ENCODE measurements at regions of chr16 and their contacts with region 1.

Region 1: GRCh38 chr16:57519796-57520360 is 16.5 kb downstream of the CCDC102A start:
- DNase-seq: peak in 9 of 10 donors; percentile 76 to 88 (median 80)
- H3K4me3 ChIP-seq: no peak overlapping the region
- H3K27ac ChIP-seq: no peak overlapping the region
- H3K27me3 ChIP-seq: no peaks in the 10 kb centered on the region
- CTCF ChIP-seq: peak; percentile 78 to 98 (median 95)

Region 2: GRCh38 chr16:57300387-57301125 is 219.3 kb before region 1 on chr16:
- intact Hi-C with region 1: loop called (anchors 2 to 5 kb)
- DNase-seq: peak; percentile 97 to 100 (median 99)
- H3K4me3 ChIP-seq: peak overlapping the region; percentile 29 to 73 (median 60)
- H3K27ac ChIP-seq: peak overlapping the region; percentile 81 to 99 (median 95)
- H3K27me3 ChIP-seq: no peaks in the 10 kb centered on the region
- CTCF ChIP-seq: peak; percentile 89 to 100 (median 98)

Region 3: DNA sequence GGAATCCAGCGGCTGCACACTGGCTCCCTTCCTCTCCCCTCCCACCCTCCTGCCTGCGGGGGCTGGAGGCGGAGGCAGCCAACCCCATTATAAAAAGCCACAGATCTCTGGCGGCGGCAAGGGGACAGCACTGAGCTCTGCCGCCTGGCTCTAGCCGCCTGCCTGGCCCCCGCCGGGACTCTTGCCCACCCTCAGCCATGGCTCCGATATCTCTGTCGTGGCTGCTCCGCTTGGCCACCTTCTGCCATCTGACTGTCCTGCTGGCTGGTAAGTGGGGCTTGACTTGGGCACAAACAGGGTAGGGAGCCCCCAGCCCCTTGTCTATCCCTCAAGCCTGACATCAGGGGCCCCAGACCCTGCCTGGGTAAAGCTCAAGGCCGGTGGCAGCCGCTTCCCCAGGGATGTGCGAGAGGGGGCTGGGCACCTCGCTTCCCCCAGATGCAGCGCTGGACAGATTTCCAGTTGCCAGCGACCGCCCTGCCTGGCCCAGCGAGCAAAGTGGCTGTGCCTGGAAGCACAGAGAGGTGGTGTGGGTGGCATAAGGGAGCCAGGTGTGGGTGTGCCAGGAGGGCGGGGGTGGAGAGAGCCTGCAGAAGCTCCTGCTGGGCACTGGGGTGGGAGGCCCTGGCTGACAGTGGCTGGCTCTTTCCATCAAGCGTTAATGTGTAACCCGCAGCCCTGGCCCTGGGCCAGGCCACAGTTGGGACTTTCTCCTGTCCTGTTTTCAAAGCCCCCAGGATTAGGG is 147.3 kb before region 1 on chr16 and contains the start of gene CX3CL1:
- intact Hi-C with region 1: no loop called
- DNase-seq: peak; percentile 45 to 90 (median 82)
- H3K4me3 ChIP-seq: peak within 1 kb of the TSS; percentile 27 to 83 (median 68)
- H3K27ac ChIP-seq: peak within 1 kb of the TSS in 58 of 59 donors; percentile 61 to 97 (median 91)
- H3K27me3 ChIP-seq: no peaks in the 10 kb centered on the region
- CTCF ChIP-seq: peak in 21 of 56 donors; percentile 11 to 37 (median 19)
- total RNA-seq, gene CX3CL1: 32.3 to 105 (median 74.3) TPM

Region 4: DNA sequence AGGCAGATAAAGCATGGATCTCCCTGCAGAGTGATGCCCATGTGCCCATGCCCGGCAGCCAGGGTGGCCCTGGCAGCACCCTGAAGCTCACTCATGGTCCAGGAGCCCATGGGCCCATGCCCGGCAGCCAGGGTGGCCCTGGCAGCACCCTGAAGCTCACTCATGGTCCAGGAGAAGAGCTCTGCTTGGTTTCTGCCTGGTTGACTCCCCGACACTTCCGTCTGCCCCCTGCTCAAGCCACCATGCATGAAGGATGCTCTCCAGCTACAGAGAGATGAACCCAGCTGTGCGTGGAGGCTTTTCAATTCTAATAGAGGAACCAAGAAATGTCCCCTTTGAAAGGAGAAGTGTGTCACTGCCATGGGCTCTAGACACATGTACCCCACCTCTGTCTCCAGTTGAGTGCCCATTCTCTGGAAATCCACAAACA is 106.6 kb before region 1 on chr16:
- intact Hi-C with region 1: loop called in 1 of 2 experiments (anchors 5 kb)
- DNase-seq: no peak
- H3K4me3 ChIP-seq: no peak overlapping the region
- H3K27ac ChIP-seq: no peak overlapping the region
- H3K27me3 ChIP-seq: no peaks in the 10 kb centered on the region
- CTCF ChIP-seq: no peak

Region 5: GRCh38 chr16:57422026-57422944 is 97.6 kb before region 1 on chr16:
- intact Hi-C with region 1: loop called (anchors 5 kb)
- DNase-seq: no peak
- H3K4me3 ChIP-seq: no peak overlapping the region
- H3K27ac ChIP-seq: peak overlapping the region in 1 of 59 donors; percentile 36
- H3K27me3 ChIP-seq: no peaks in the 10 kb centered on the region
- CTCF ChIP-seq: peak in 54 of 56 donors; percentile 20 to 70 (median 54)

Region 6: GRCh38 chr16:57462209-57462977 is 57.5 kb before region 1 on chr16 and contains the start of gene POLR2C:
- intact Hi-C with region 1: loop called in 1 of 2 experiments (anchors 5 kb)
- DNase-seq: peak; percentile 74 to 89 (median 84)
- H3K4me3 ChIP-seq: peak within 1 kb of the TSS; percentile 80 to 100 (median 93)
- H3K27ac ChIP-seq: peak within 1 kb of the TSS in 57 of 59 donors; percentile 37 to 95 (median 88)
- H3K27me3 ChIP-seq: no peaks in the 10 kb centered on the region
- CTCF ChIP-seq: peak; percentile 94 to 100 (median 98)
- total RNA-seq, gene POLR2C: 47.5 to 83.3 (median 64.4) TPM

Region 7: DNA sequence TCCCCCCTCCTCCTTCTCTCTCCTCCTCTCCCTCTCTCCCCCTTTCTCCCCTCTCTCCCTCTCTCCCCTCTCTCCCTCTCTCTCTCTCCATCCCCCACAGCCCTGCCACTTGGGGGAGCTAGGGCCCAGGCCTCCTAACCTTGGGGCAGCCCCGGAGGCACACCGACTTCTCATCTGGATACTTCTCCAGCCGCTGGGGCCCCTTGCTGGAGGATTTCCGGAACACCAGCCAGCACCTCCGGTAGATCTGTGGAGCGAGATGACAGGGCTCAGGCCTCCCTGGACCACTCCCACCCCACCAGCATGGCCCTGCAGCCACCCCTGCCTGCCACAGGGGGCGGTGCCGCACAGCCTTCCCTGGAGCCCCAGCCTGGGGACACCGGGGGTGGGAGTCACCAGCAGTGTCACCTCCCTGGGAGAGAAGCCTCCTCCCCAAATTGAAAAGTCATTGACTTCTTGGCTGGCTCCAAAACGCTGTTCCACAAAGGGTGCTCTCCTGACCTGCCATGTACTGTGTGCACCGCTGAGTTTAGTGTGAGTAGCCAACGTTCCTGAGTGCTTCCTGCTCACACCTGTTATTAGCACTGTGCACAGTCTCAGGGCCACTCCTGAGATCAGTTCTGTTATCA is 44.1 kb before region 1 on chr16:
- intact Hi-C with region 1: loop called in 1 of 2 experiments (anchors 5 kb)
- DNase-seq: no peak
- H3K4me3 ChIP-seq: no peak overlapping the region
- H3K27ac ChIP-seq: peak overlapping the region in 7 of 59 donors; percentile 5 to 39 (median 21)
- H3K27me3 ChIP-seq: no peaks in the 10 kb centered on the region
- CTCF ChIP-seq: peak in 28 of 56 donors; percentile 10 to 59 (median 30)